ENCODE measurements at regions of chr9 and their contacts with region 1.

Region 1: GRCh38 chr9:35553670-35554543 is 51.2 kb upstream of the TESK1 start:
- DNase-seq: peak; percentile 67
- H3K4me3 ChIP-seq: no peak overlapping the region
- H3K27ac ChIP-seq: no peak overlapping the region
- H3K4me1 ChIP-seq: peaks cover 3% of the 10 kb centered on the region
- CTCF ChIP-seq: peak; percentile 92

Region 2: GRCh38 chr9:35481347-35481975 is 72.4 kb before region 1 on chr9:
- CTCF ChIA-PET with region 1: no interaction called
- POLR2A ChIA-PET with region 1: interaction called, 4 read pairs
- intact Hi-C with region 1: loop called (anchors 5 kb)
- DNase-seq: peak; percentile 24
- H3K4me3 ChIP-seq: no peak overlapping the region
- H3K27ac ChIP-seq: no peak overlapping the region
- H3K4me1 ChIP-seq: no peaks in the 10 kb centered on the region
- CTCF ChIP-seq: peak; percentile 74

Region 3: GRCh38 chr9:35564658-35565061 is 10.8 kb after region 1 on chr9:
- CTCF ChIA-PET with region 1: no interaction called
- POLR2A ChIA-PET with region 1: no interaction called
- intact Hi-C with region 1: no loop called
- DNase-seq: no peak
- H3K4me3 ChIP-seq: no peak overlapping the region
- H3K27ac ChIP-seq: no peak overlapping the region
- H3K4me1 ChIP-seq: peaks cover 8% of the 10 kb centered on the region
- CTCF ChIP-seq: no peak

Measured in OCI-LY7 (cell line).